ENCODE measurements at regions of chr17 and their contacts with region 1.

Region 1: DNA sequence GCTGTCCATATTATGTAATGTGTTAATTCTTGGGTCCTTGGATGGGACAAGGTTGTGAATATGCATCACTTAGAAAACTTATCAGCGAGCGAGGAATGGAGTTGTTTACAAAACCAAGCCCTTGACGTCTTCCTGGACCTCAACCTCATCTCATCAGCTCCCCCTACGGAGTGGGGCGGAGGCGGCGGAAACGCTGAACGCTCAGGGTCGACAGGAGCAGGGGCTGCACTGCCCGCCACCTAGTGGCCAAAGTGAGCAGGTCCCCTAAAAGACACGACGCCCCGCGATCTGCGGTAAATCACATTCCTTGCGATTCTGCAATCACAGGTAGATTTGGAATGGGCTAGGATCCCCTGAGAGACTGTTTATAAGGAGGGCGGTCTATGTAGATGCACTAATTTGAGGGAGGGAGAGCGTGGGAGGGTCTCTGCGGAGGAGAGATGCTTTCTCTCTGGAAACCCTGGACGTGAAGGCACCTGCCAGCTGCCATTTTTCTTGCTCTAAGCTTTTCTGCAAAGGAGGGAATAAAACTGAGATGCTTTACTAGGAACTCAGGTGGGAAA is 5.4 kb upstream of the ICAM2 start:
- DNase-seq: peak; percentile 94
- H3K4me3 Mint-ChIP-seq: peak overlapping the region; percentile 38
- H3K27ac Mint-ChIP-seq: peak overlapping the region; percentile 93
- H3K4me1 Mint-ChIP-seq: peaks cover 72% of the 10 kb centered on the region
- H3K27me3 Mint-ChIP-seq: no peaks in the 10 kb centered on the region

Region 2: GRCh38 chr17:63075969-63076368 is 949.8 kb before region 1 on chr17:
- CTCF ChIA-PET with region 1: no interaction called
- POLR2A ChIA-PET with region 1: no interaction called
- DNase-seq: no peak
- H3K4me3 Mint-ChIP-seq: no peak overlapping the region
- H3K27ac Mint-ChIP-seq: no peak overlapping the region
- H3K4me1 Mint-ChIP-seq: peaks cover 4% of the 10 kb centered on the region
- H3K27me3 Mint-ChIP-seq: peaks cover 2% of the 10 kb centered on the region

Region 3: DNA sequence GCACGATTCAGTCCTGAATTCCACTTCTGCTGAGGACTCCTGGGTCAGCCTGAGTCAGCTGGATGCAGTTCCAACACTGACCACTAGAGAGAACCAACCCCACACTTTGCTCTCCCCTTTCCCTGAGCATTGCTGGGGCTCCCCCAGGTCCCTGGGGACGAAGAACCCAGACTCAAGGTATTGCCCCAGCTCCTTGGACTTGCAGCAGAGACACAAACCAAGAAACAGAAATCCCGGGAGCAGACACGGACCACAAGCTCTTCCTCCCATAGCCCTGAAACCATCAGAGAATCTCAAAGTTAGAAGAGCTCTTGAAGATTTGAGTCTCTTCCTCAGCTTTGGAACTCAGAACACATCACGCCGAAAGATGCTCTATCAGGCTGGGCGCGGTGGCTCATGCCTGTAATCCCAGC is 106.5 kb before region 1 on chr17:
- CTCF ChIA-PET with region 1: interaction called, 14 read pairs
- POLR2A ChIA-PET with region 1: no interaction called
- DNase-seq: peak; percentile 83
- H3K4me3 Mint-ChIP-seq: no peak overlapping the region
- H3K27ac Mint-ChIP-seq: no peak overlapping the region
- H3K4me1 Mint-ChIP-seq: peaks cover 7% of the 10 kb centered on the region
- H3K27me3 Mint-ChIP-seq: peaks cover 4% of the 10 kb centered on the region

Region 4: GRCh38 chr17:63946440-63947367 is 79.1 kb before region 1 on chr17:
- CTCF ChIA-PET with region 1: interaction called, 11 read pairs
- POLR2A ChIA-PET with region 1: no interaction called
- DNase-seq: peak; percentile 64
- H3K4me3 Mint-ChIP-seq: peak overlapping the region; percentile 50
- H3K27ac Mint-ChIP-seq: peak overlapping the region; percentile 87
- H3K4me1 Mint-ChIP-seq: peaks cover 18% of the 10 kb centered on the region
- H3K27me3 Mint-ChIP-seq: peaks cover 11% of the 10 kb centered on the region

Region 5: GRCh38 chr17:64041912-64042311 is 16.1 kb after region 1 on chr17:
- CTCF ChIA-PET with region 1: interaction called, 33 read pairs
- POLR2A ChIA-PET with region 1: no interaction called
- DNase-seq: no peak
- H3K4me3 Mint-ChIP-seq: no peak overlapping the region
- H3K27ac Mint-ChIP-seq: peak overlapping the region; percentile 60
- H3K4me1 Mint-ChIP-seq: peaks cover 19% of the 10 kb centered on the region
- H3K27me3 Mint-ChIP-seq: no peaks in the 10 kb centered on the region

Region 6: GRCh38 chr17:64073771-64074703 is 48.2 kb after region 1 on chr17:
- CTCF ChIA-PET with region 1: interaction called, 10 read pairs
- POLR2A ChIA-PET with region 1: no interaction called
- DNase-seq: no peak
- H3K4me3 Mint-ChIP-seq: no peak overlapping the region
- H3K27ac Mint-ChIP-seq: no peak overlapping the region
- H3K4me1 Mint-ChIP-seq: peaks cover 26% of the 10 kb centered on the region
- H3K27me3 Mint-ChIP-seq: no peaks in the 10 kb centered on the region

Region 7: DNA sequence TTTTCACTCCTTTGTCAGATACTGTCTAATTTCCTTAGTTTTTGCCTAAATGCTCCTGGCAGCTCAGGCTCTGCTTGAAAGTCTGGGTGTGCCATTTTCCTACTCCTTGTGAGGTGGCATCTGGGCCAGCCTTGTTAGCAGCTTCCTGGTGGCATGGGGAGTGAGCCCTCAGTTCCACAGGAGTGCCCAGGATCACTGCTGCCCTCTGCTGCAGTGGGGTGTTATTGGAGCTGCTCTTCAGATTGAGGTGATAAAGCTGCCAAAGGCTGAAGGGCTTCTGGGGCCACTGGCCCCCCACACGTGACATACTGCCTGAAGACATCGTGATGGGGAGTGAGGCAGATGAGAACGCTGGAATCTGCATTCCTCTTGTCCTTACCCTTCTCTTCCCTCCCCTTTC is 508.4 kb after region 1 on chr17:
- CTCF ChIA-PET with region 1: no interaction called
- POLR2A ChIA-PET with region 1: no interaction called
- DNase-seq: no peak
- H3K4me3 Mint-ChIP-seq: no peak overlapping the region
- H3K27ac Mint-ChIP-seq: peak overlapping the region; percentile 25
- H3K4me1 Mint-ChIP-seq: no peaks in the 10 kb centered on the region
- H3K27me3 Mint-ChIP-seq: no peaks in the 10 kb centered on the region